ENCODE measurements at regions of chr1 and their contacts with region 1.

Region 1: DNA sequence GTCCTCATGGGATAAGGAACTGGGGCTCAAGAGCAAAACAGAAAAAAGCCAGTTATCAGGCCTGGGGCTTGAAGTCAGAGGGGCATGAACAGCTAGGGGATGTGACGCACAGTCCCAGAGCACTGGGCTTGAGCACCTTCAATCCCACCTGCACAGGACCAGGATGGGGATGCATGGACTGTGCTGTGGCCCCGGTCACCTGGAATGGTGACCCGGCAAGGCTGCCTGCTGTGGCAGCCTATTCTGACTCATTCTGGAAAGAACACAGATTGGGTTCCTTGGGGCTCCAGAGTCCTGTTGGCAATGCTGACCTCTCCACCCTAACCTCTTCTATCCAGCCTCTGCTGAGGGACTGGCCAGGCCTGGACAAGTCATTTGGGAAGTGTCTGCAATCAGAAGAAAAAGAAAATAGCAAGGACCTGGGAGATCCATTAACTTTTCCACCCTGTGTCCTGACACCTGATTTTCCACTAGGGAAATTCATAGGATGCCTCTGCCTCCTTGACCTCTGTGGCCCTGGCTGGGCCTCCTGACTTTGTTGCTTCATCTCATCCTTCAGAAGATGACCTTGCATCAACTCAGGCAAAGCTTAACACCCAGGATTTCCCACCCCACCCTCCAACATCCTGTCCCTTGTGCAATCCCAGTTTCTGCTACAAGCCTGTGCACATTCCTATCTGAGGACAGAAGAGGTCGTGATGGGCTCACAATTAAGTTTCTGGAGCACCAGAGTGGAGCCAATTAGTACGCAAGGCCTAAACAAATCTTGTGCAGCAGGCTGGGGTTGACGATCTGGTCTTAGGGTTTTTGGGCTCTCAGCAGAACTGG is 17.9 kb upstream of the FMOD start:
- DNase-seq: peak; percentile 47
- H3K4me3 ChIP-seq: no peak overlapping the region
- H3K27ac ChIP-seq: no peak overlapping the region
- H3K4me1 ChIP-seq: no peaks in the 10 kb centered on the region
- H3K27me3 ChIP-seq: peaks cover 27 to 46% of the 10 kb centered on the region in 2 experiments
- CTCF ChIP-seq: peak in 1 of 2 donors; percentile 20
- POLR2A ChIP-seq: no peak

Region 2: DNA sequence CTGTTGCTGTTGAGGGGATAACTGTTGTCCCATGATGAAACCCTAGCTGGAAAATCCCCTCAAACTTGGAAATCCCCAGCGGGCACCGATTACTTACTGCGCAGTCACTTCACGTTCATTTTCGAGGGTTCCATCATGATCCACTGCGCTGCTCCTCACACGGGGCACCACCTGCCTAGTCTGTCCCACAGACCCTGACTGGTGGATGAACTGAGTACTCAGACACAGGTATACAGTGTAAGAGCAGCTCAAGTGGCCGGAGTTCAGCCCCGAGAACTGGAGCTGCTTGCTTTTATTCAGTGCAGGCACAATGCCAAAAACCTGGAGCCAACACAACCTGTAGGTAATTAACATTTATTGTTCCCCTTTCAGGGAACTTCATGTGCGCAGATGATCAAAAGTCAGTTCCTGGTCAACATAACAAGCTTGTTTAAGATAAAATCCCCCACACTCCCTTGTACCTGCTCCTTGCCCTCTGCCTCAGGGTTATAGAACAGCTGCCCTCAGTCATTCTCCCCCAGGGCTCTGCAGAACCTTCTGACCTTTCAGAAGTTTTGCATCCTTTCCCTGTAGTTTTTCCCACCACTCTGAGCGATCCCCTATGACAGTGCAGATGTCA is 60.3 kb after region 1 on chr1:
- CTCF ChIA-PET with region 1: no interaction called
- POLR2A ChIA-PET with region 1: no interaction called
- dilution Hi-C with region 1: loop called (anchors 10 kb)
- intact Hi-C with region 1: no loop called
- DNase-seq: no peak
- H3K4me3 ChIP-seq: no peak overlapping the region
- H3K27ac ChIP-seq: no peak overlapping the region
- H3K4me1 ChIP-seq: no peaks in the 10 kb centered on the region
- H3K27me3 ChIP-seq: peaks cover 17 to 18% of the 10 kb centered on the region in 2 experiments
- CTCF ChIP-seq: no peak
- POLR2A ChIP-seq: no peak

Region 3: GRCh38 chr1:203440771-203441170 is 71.9 kb after region 1 on chr1:
- CTCF ChIA-PET with region 1: interaction called, 10 read pairs
- POLR2A ChIA-PET with region 1: no interaction called
- dilution Hi-C with region 1: no loop called
- intact Hi-C with region 1: no loop called
- DNase-seq: peak; percentile 65
- H3K4me3 ChIP-seq: no peak overlapping the region
- H3K27ac ChIP-seq: no peak overlapping the region
- H3K4me1 ChIP-seq: peaks cover 5% of the 10 kb centered on the region
- H3K27me3 ChIP-seq: peaks cover 20 to 39% of the 10 kb centered on the region in 2 experiments
- CTCF ChIP-seq: peak; percentile 27 to 62
- POLR2A ChIP-seq: no peak

Region 4: GRCh38 chr1:203486618-203487370 is 118.0 kb after region 1 on chr1:
- CTCF ChIA-PET with region 1: interaction called, 6 read pairs
- POLR2A ChIA-PET with region 1: no interaction called
- dilution Hi-C with region 1: no loop called
- intact Hi-C with region 1: loop called (anchors 1 kb)
- DNase-seq: no peak
- H3K4me3 ChIP-seq: peak overlapping the region in 2 of 3 experiments; percentile 37 to 38
- H3K27ac ChIP-seq: peak overlapping the region; percentile 52
- H3K4me1 ChIP-seq: no peaks in the 10 kb centered on the region
- H3K27me3 ChIP-seq: peaks cover 5 to 8% of the 10 kb centered on the region in 2 experiments
- CTCF ChIP-seq: no peak
- POLR2A ChIP-seq: no peak